Ascending aorta (tissue), 2 donors: ENCODE measurements at regions of chr1 and their contacts with region 1.

Region 1: GRCh38 chr1:157156058-157156541 is 17.9 kb upstream of the ETV3 start:
- DNase-seq: peak in 1 of 2 donors; percentile 82
- H3K4me3 ChIP-seq: peak overlapping the region; percentile 24 to 43
- H3K27ac ChIP-seq: no peak overlapping the region
- H3K4me1 ChIP-seq: peaks cover 0 to 7% of the 10 kb centered on the region in 2 donors
- H3K27me3 ChIP-seq: no peaks in the 10 kb centered on the region
- CTCF ChIP-seq: peak; percentile 91 to 96 (median 96)

Region 2: GRCh38 chr1:157090196-157090647 is 65.9 kb before region 1 on chr1:
- intact Hi-C with region 1: loop called (anchors 1 kb)
- DNase-seq: peak in 1 of 2 donors; percentile 87
- H3K4me3 ChIP-seq: no peak overlapping the region
- H3K27ac ChIP-seq: no peak overlapping the region
- H3K4me1 ChIP-seq: peaks cover 0 to 3% of the 10 kb centered on the region in 2 donors
- H3K27me3 ChIP-seq: no peaks in the 10 kb centered on the region
- CTCF ChIP-seq: peak; percentile 86 to 98 (median 95)

Region 3: GRCh38 chr1:157226739-157227138 is 70.6 kb after region 1 on chr1:
- intact Hi-C with region 1: no loop called
- DNase-seq: no peak
- H3K4me3 ChIP-seq: no peak overlapping the region
- H3K27ac ChIP-seq: no peak overlapping the region
- H3K4me1 ChIP-seq: no peaks in the 10 kb centered on the region
- H3K27me3 ChIP-seq: no peaks in the 10 kb centered on the region
- CTCF ChIP-seq: no peak